Transverse colon (tissue), 4 donors: ENCODE measurements at regions of chr14 and their contacts with region 1.

Region 1: GRCh38 chr14:35404449-35405303 is at the start of gene NFKBIA:
- DNase-seq: peak; percentile 93
- H3K4me3 ChIP-seq: peak within 1 kb of the TSS; percentile 84 to 94 (median 92)
- H3K27ac ChIP-seq: peak within 1 kb of the TSS; percentile 99 to 100 (median 100)
- H3K4me1 ChIP-seq: peaks cover 21 to 51% (median 45%) of the 10 kb centered on the region in 4 donors
- H3K27me3 ChIP-seq: no peaks in the 10 kb centered on the region
- CTCF ChIP-seq: peak in 3 of 5 experiments; percentile 34 to 52 (median 37)
- EP300 ChIP-seq: no peak
- POLR2A ChIP-seq: peak; percentile 91
- total RNA-seq, gene NFKBIA: 362 to 1,916 (median 456) TPM

Region 2: GRCh38 chr14:34714320-34715126 is 690.2 kb before region 1 on chr14 and contains the start of gene CFL2:
- in situ Hi-C with region 1: loop called in 1 of 4 experiments (anchors 25 kb)
- intact Hi-C with region 1: no loop called
- DNase-seq: peak; percentile 82
- H3K4me3 ChIP-seq: peak within 1 kb of the TSS; percentile 56 to 96 (median 84)
- H3K27ac ChIP-seq: peak within 1 kb of the TSS; percentile 94 to 98 (median 96)
- H3K4me1 ChIP-seq: peaks cover 6 to 37% (median 16%) of the 10 kb centered on the region in 4 donors
- H3K27me3 ChIP-seq: no peaks in the 10 kb centered on the region
- CTCF ChIP-seq: no peak
- EP300 ChIP-seq: no peak
- POLR2A ChIP-seq: peak; percentile 55
- total RNA-seq, gene CFL2: 30.4 to 108 (median 44.9) TPM

Region 3: DNA sequence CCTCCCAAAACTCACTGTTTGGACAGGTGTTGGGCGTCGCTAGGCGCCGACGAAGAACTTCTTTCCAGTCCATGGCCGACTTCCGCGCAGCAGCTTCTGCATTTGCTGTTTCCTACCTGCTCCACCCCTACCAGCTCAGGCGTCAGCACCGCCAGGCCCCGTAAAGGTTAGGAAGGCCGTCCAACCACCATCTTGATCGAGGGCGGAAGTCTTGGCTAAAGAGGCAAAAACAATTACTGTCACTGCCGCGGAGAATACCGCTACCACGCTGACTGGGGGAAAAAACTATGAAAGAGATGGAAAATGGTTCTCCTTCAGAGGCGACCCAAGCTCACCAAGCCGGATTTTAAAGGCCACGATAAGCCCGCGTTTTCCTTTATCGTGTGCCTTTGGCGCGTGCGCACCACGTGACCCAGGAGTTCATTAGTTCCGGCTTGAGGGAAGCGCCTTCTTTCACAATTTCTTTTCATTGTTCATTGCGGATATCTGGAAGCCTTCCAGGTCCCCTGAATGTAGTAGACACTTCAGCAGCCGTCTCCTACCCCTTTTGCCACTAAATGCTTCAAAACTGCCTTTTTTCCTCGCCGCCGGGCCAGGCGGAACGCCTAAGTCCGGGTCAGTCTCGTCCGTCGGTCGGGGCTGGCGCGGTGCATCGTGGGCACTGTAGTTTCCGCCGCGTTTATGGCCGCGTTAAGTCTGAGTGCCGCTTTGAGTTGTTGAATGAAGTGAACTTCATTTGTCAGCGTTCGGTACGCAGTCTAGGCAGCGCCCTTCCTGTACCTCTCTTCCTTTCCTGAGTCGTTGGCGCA is 282.6 kb before region 1 on chr14 and contains the starts of genes PPP2R3C and PRORP:
- in situ Hi-C with region 1: loop called in 1 of 4 experiments (anchors 25 kb)
- intact Hi-C with region 1: no loop called
- DNase-seq: peak; percentile 93
- H3K4me3 ChIP-seq: peak within 1 kb of the TSS; percentile 58 to 96 (median 61)
- H3K27ac ChIP-seq: peak within 1 kb of the TSS; percentile 92 to 99 (median 96)
- H3K4me1 ChIP-seq: peaks cover 5 to 51% (median 28%) of the 10 kb centered on the region in 4 donors
- H3K27me3 ChIP-seq: no peaks in the 10 kb centered on the region
- CTCF ChIP-seq: no peak
- EP300 ChIP-seq: peak; percentile 81
- POLR2A ChIP-seq: peak; percentile 59
- total RNA-seq, gene PPP2R3C: 13.5 to 26.5 (median 19.1) TPM
- total RNA-seq, gene PRORP: 23.2 to 46.0 (median 32.2) TPM

Region 4: DNA sequence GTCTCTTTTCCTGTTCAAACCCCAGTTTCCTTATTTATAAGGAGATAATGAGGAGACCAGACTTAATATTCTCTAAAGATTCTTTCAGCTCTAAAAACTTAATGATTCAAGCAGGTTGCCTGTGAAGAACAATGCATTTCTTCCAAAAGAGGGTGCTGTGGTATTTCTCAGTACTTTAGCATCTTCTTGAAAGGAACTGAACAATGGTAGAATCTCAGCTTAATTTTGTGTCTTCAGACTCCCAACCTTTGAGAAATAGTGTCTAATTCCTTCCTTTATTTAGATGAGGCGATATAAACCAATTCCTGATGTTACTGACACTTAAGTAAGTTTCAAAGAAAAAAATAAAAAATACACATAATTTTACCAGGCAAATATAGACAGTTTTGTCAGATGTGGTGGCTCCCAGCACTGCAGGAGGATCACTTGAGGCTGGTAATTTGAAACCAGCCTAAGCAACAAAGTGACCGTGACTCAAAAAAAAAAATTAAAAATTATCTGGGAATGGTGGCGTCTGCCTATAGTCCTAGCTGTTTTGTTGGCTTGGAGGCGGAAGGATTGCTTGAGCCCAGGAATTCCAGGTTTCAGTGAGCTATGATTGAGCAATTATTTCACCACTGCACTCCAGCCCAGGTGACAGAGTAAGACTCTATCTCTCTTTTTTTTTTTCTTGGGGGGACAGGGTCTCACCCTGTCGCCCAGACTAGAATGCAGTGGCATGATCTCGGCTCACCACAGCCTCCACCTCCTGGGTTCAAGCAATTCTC is 189.4 kb before region 1 on chr14:
- in situ Hi-C with region 1: no loop called
- intact Hi-C with region 1: loop called (anchors 5 kb)
- DNase-seq: no peak
- H3K4me3 ChIP-seq: no peak overlapping the region
- H3K27ac ChIP-seq: no peak overlapping the region
- H3K4me1 ChIP-seq: no peaks in the 10 kb centered on the region
- H3K27me3 ChIP-seq: no peaks in the 10 kb centered on the region
- CTCF ChIP-seq: peak; percentile 23 to 46 (median 42)
- EP300 ChIP-seq: no peak
- POLR2A ChIP-seq: no peak

Region 5: DNA sequence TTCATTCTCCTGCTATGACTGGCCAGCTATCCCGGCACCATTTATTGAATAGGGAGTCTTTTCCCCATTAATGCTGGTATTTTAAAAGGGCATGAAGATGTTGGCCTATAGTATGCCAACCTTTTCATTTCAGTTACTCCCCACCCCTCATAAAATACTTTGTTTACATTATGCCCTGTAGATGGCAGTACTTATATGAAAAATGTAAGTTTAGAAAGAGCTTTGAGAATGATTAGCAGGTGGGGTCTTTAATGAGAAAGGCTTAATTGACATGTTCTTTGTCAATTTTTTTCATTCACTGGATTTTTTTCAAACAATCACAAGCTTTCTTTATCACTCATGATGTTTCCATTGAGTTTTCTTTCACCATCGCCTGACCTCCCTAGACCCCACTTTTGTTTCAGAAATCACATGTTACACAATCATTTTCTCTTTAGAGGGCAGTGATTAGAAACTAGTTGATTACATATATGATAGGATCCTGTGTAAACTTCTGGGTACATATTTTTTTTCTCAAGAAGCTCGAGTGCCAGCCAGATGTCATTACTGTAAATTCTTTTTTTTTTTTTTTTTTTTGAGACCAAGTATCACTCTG is 175.1 kb before region 1 on chr14:
- in situ Hi-C with region 1: loop called in 1 of 4 experiments (anchors 25 kb)
- intact Hi-C with region 1: no loop called
- DNase-seq: no peak
- H3K4me3 ChIP-seq: no peak overlapping the region
- H3K27ac ChIP-seq: no peak overlapping the region
- H3K4me1 ChIP-seq: peaks cover 0 to 11% (median 0%) of the 10 kb centered on the region in 4 donors
- H3K27me3 ChIP-seq: no peaks in the 10 kb centered on the region
- CTCF ChIP-seq: peak in 4 of 5 experiments; percentile 19 to 30 (median 24)
- EP300 ChIP-seq: no peak
- POLR2A ChIP-seq: no peak

Region 6: GRCh38 chr14:35292051-35292769 is 112.5 kb before region 1 on chr14 and contains the start of gene PSMA6:
- in situ Hi-C with region 1: loop called in 2 of 4 experiments (anchors 10 to 25 kb)
- intact Hi-C with region 1: loop called (anchors 5 kb)
- DNase-seq: peak; percentile 100
- H3K4me3 ChIP-seq: peak within 1 kb of the TSS; percentile 58 to 68 (median 64)
- H3K27ac ChIP-seq: peak within 1 kb of the TSS; percentile 89 to 91 (median 90)
- H3K4me1 ChIP-seq: peaks cover 12 to 47% (median 28%) of the 10 kb centered on the region in 4 donors
- H3K27me3 ChIP-seq: no peaks in the 10 kb centered on the region
- CTCF ChIP-seq: no peak
- EP300 ChIP-seq: peak; percentile 3
- POLR2A ChIP-seq: peak; percentile 92
- total RNA-seq, gene PSMA6: 24.5 to 141 (median 81.2) TPM

Region 7: GRCh38 chr14:35335388-35336092 is 69.1 kb before region 1 on chr14:
- in situ Hi-C with region 1: loop called in 1 of 4 experiments (anchors 5 kb)
- intact Hi-C with region 1: loop called (anchors 1 kb)
- DNase-seq: peak; percentile 94
- H3K4me3 ChIP-seq: peak overlapping the region in 1 of 4 donors; percentile 27
- H3K27ac ChIP-seq: peak overlapping the region; percentile 91 to 96 (median 94)
- H3K4me1 ChIP-seq: peaks cover 51 to 90% (median 76%) of the 10 kb centered on the region in 4 donors
- H3K27me3 ChIP-seq: no peaks in the 10 kb centered on the region
- CTCF ChIP-seq: peak in 1 of 5 experiments; percentile 13
- EP300 ChIP-seq: no peak
- POLR2A ChIP-seq: peak; percentile 66

Region 8: DNA sequence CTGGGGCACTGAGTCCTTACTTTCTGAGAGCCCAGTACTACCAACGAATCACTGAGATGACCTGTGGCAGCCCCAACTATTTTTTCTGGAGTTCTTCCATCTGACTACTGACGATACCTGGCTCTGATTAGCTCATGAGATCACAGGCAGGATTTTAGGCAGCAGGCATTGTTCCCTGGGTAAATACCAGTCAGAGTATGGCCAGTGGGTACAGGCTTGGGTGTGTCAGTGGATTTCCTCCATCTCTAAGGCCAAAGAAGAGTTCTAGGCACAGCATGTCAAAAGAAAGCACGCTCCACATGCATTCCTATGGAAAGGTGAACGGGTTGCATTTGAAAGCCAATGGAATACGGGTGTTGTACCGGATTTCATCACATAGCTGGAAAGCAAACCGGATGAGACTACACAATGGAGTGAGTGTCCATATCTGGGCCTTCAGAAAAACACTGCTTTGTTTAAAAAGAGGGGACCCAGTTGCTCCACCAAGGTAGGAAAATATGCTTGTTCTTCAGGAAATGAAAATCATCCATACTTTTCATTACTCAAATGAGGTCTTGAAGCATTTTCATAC is 1312.0 kb after region 1 on chr14:
- in situ Hi-C with region 1: no loop called
- intact Hi-C with region 1: no loop called
- DNase-seq: no peak
- H3K4me3 ChIP-seq: no peak overlapping the region
- H3K27ac ChIP-seq: no peak overlapping the region
- H3K4me1 ChIP-seq: peaks cover 0 to 2% (median 0%) of the 10 kb centered on the region in 4 donors
- H3K27me3 ChIP-seq: no peaks in the 10 kb centered on the region
- CTCF ChIP-seq: no peak
- EP300 ChIP-seq: no peak
- POLR2A ChIP-seq: no peak